ENCODE measurements at regions of chr22 and their contacts with region 1.

Region 1: GRCh38 chr22:40818747-40819598 is at the start of gene SLC25A17:
- DNase-seq: peak; percentile 81 to 98 (median 89)

Region 2: GRCh38 chr22:40651563-40652501 is 167.1 kb before region 1 on chr22:
- intact Hi-C with region 1: no loop called
- DNase-seq: peak; percentile 92 to 99 (median 97)

Region 3: DNA sequence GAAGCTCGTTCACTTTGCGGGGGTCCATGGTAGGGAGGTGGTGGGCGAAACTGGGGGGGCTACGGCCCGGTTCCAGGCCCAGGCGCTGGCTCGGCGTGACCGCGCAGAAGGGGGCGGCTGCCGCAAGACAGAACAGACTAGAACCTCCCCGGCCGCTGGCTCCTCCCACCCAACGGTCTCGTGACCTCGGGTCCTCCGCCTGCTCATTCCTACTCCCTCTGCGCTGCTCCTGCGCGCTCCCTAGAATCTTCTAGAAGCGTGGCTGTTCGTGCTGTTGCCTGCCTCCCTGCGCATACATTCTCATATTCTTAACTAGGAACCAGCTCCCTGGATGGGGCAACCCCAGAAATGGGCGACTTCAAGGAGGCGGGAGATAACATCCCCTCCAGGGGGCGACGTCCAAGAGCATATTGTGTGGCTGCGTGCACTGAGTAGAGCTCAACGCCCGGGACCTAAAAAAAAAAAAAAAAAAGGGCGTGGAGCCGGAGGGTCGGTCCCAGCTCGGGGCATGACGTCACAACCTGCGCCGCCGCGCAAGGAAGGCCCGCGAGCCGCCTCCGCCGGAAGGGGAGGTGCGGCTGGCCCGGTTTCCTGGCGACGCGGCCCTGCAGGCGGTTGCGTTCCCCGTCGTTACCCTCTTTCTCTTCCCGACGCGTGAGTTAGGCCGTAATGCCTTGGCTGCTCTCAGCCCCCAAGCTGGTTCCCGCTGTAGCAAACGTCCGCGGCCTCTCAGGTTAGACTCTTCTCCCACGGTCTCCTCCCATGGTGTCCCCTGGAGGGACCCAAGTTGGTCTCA is 37.7 kb after region 1 on chr22 and contains the starts of genes ST13 and XPNPEP3:
- intact Hi-C with region 1: loop called (anchors 2 kb)
- DNase-seq: peak; percentile 93 to 99 (median 96)

Region 4: GRCh38 chr22:40898850-40899357 is 79.9 kb after region 1 on chr22:
- intact Hi-C with region 1: loop called (anchors 10 kb)
- DNase-seq: no peak

Region 5: GRCh38 chr22:40975366-40975765 is 156.4 kb after region 1 on chr22:
- intact Hi-C with region 1: no loop called
- DNase-seq: no peak

Region 6: GRCh38 chr22:41078931-41079330 is 260.0 kb after region 1 on chr22:
- intact Hi-C with region 1: no loop called
- DNase-seq: peak in 1 of 10 donors; percentile 18

Measured in posterior cingulate gyrus (tissue), 11 donors.